GM23248 (cell line): ENCODE measurements at regions of chr21 and their contacts with region 1.

Region 1: DNA sequence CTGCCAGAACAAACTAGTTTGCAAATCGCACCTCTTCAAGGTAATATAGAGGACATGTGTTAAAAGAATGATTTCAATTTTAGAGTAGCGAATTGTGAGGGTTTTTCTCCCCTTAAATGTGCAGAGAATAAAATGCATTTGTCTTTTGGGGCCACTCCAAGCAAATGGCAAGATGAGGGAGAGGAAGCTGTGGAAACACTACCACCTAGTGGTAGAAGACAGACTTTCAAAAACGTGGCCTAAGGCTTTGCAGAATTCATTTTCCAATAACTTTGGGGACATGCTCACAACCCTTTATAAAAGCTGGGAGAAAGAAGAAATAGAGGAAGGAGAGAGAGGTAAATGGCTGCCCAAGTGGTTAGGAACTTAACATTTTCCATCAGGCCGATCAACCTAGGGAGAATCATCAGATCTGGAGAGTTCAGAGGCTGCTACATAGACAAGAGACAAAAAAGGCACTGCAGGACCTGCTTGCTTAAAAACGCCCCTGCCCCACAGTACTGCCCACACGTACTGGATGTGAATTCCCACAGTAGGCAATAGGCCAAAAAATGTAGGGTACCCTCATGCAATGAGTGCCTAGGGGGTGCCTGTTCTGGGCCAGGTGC is 15.7 kb upstream of the RCAN1 start:
- DNase-seq: peak; percentile 74
- H3K4me3 ChIP-seq: no peak overlapping the region
- H3K27ac ChIP-seq: no peak overlapping the region
- H3K4me1 ChIP-seq: no peaks in the 10 kb centered on the region
- H3K27me3 ChIP-seq: peaks cover 38% of the 10 kb centered on the region

Region 2: DNA sequence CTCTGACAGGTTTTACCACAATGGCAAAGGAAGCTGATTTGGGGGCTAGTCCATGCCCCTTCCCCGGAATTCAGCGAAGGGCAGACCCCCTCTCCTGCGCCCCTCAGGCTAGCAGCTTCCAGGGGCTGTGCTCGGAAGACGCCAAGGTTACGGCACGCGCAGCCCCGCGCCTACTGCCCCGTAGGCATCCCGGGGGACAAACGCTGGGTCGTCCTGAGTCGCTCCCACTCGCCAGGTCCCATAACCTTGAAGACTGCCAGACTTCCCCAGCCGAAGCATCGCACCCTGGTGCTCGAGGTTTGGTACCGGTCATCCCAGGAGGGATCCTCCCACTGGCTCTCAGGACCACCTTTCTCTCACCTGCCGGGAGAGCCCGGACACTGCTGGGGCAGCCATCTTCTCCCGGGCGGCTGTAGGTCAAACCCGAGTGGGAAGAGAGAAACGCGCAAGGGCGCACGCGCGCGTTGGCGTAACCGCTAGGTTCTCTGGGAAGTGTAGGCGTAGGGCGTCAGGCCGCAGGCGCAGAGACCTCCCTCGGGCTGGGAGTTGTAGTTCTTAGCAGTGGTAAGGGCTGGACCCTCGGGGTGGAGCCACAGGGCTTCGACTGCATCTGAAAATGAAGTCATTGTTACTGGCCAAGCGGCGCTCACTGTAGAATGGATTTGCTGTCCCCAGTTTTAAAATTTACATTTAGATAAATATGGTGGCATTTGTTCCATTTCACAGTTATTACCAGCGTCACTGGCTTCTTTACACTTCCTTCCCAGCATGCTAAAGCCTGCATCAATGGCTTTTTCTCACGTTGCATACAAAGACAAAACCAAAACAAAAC is 715.1 kb before region 1 on chr21 and contains the start of gene ATP5PO:
- in situ Hi-C with region 1: loop called (anchors 25 kb)
- DNase-seq: peak; percentile 100
- H3K4me3 ChIP-seq: peak within 1 kb of the TSS; percentile 96
- H3K27ac ChIP-seq: peak within 1 kb of the TSS; percentile 8; the same call in 1 of the 2 replicates
- H3K4me1 ChIP-seq: peaks cover 10% of the 10 kb centered on the region; the same call in 1 of the 2 replicates
- H3K27me3 ChIP-seq: no peaks in the 10 kb centered on the region
- total RNA-seq, gene ATP5PO: 91.4 and 122 TPM in 2 replicates

Region 3: GRCh38 chr21:34243562-34243961 is 387.1 kb before region 1 on chr21:
- in situ Hi-C with region 1: loop called (anchors 25 kb)
- DNase-seq: peak; percentile 38
- H3K4me3 ChIP-seq: no peak overlapping the region
- H3K27ac ChIP-seq: no peak overlapping the region
- H3K4me1 ChIP-seq: no peaks in the 10 kb centered on the region
- H3K27me3 ChIP-seq: no peaks in the 10 kb centered on the region

Region 4: GRCh38 chr21:34771512-34772028 is 140.9 kb after region 1 on chr21:
- in situ Hi-C with region 1: no loop called
- DNase-seq: peak; percentile 76
- H3K4me3 ChIP-seq: no peak overlapping the region
- H3K27ac ChIP-seq: peak overlapping the region; percentile 52
- H3K4me1 ChIP-seq: peaks cover 7% of the 10 kb centered on the region
- H3K27me3 ChIP-seq: no peaks in the 10 kb centered on the region